Caco-2 (cell line): ENCODE measurements at regions of chr3 and their contacts with region 1.

Region 1: GRCh38 chr3:172096881-172097420 is 57.6 kb downstream of the FNDC3B start:
- DNase-seq: peak; percentile 87 to 88
- H3K4me3 ChIP-seq: no peak overlapping the region
- H3K4me3 Mint-ChIP-seq: peak overlapping the region; percentile 39
- H3K27ac Mint-ChIP-seq: peak overlapping the region; percentile 80
- H3K4me1 ChIP-seq: peaks cover 72% of the 10 kb centered on the region
- H3K4me1 Mint-ChIP-seq: peaks cover 39% of the 10 kb centered on the region
- H3K27me3 ChIP-seq: no peaks in the 10 kb centered on the region
- H3K27me3 Mint-ChIP-seq: no peaks in the 10 kb centered on the region
- CTCF ChIP-seq: no peak

Region 2: GRCh38 chr3:172061724-172062184 is 35.2 kb before region 1 on chr3:
- CTCF ChIA-PET with region 1: interaction called, 3 read pairs
- POLR2A ChIA-PET with region 1: no interaction called
- intact Hi-C with region 1: loop called (anchors 2 kb)
- DNase-seq: no peak
- H3K4me3 ChIP-seq: no peak overlapping the region
- H3K4me3 Mint-ChIP-seq: peak overlapping the region; percentile 58
- H3K27ac Mint-ChIP-seq: no peak overlapping the region
- H3K4me1 ChIP-seq: peaks cover 53% of the 10 kb centered on the region
- H3K4me1 Mint-ChIP-seq: peaks cover 31% of the 10 kb centered on the region
- H3K27me3 ChIP-seq: no peaks in the 10 kb centered on the region
- H3K27me3 Mint-ChIP-seq: no peaks in the 10 kb centered on the region
- CTCF ChIP-seq: no peak

Region 3: GRCh38 chr3:172084871-172085556 is 11.9 kb before region 1 on chr3:
- CTCF ChIA-PET with region 1: no interaction called
- POLR2A ChIA-PET with region 1: no interaction called
- intact Hi-C with region 1: loop called (anchors 1 kb)
- DNase-seq: no peak
- H3K4me3 ChIP-seq: no peak overlapping the region
- H3K4me3 Mint-ChIP-seq: no peak overlapping the region
- H3K27ac Mint-ChIP-seq: no peak overlapping the region
- H3K4me1 ChIP-seq: peaks cover 62% of the 10 kb centered on the region
- H3K4me1 Mint-ChIP-seq: peaks cover 17% of the 10 kb centered on the region
- H3K27me3 ChIP-seq: no peaks in the 10 kb centered on the region
- H3K27me3 Mint-ChIP-seq: no peaks in the 10 kb centered on the region
- CTCF ChIP-seq: no peak